HCT116 (cell line): ENCODE measurements at regions of chr9 and their contacts with region 1.

Region 1: DNA sequence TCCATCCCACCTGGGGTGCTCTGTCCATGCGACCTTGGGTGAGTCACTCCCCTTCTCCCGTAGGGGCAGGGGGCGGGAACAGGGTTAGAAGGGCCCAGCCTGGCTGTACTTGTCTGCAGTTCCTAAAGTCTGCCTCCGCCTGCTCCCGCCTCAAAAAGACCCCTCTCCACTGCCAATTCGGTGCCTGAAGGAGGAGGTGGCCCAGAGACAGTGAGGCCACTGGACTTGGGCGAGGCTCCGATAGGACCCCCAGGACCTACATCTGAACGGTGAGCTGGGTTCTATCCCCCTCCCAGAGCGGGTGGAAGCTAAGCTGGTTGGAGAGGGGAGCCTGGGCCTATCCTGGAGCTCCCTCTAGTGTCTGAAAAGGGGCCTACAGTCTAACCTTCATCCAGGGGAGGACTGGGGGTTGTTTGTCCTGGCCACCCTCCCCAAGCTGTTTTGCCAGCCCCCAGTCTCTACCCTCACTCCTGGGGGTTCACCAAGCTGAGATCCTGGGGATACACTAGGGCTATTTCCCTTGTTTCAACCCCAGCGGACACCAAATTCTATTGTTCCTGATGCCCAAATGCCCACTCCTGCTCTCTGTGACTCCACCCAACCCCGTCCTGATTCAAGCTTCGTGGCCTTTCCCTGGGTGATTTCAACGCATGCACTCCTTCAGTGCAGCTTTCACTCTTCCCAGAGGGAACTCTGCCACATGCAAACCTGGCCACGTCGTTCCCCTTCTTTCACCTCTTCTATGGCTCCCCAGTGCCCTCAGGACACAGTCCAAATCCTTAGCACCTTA is 6.1 kb upstream of the CRB2 start:
- DNase-seq: peak; percentile 48
- ATAC-seq: peak; percentile 82
- H3K4me3 ChIP-seq: no peak overlapping the region
- H3K27ac ChIP-seq: no peak overlapping the region
- H3K4me1 ChIP-seq: peaks cover 0 to 16% of the 10 kb centered on the region in 2 experiments; a peak in 2 of 4 replicates
- H3K27me3 ChIP-seq: no peaks in the 10 kb centered on the region
- CTCF ChIP-seq: peak; percentile 78 to 98 (median 97); a peak in 5 of 6 replicates
- POLR2A ChIP-seq: no peak
- RAD21 ChIP-seq: peak; percentile 99

Region 2: GRCh38 chr9:122092611-122093506 is 1257.0 kb before region 1 on chr9 and contains the start of gene TTLL11:
- CTCF ChIA-PET with region 1: no interaction called
- POLR2A ChIA-PET with region 1: no interaction called
- RAD21 ChIA-PET with region 1: no interaction called
- intact Hi-C with region 1: loop called (anchors 10 kb)
- DNase-seq: peak; percentile 82
- ATAC-seq: peak; percentile 87
- H3K4me3 ChIP-seq: peak within 1 kb of the TSS; percentile 69 to 85
- H3K27ac ChIP-seq: peak within 1 kb of the TSS; percentile 23; the same call in 1 of the 2 replicates
- H3K4me1 ChIP-seq: peaks cover 9 to 15% of the 10 kb centered on the region in 2 experiments
- H3K27me3 ChIP-seq: no peaks in the 10 kb centered on the region
- CTCF ChIP-seq: no peak
- POLR2A ChIP-seq: peak; percentile 38
- RAD21 ChIP-seq: no peak
- total RNA-seq, gene TTLL11: 2.2 TPM

Region 3: GRCh38 chr9:122350638-122351355 is 999.1 kb before region 1 on chr9:
- CTCF ChIA-PET with region 1: no interaction called
- POLR2A ChIA-PET with region 1: no interaction called
- RAD21 ChIA-PET with region 1: no interaction called
- intact Hi-C with region 1: loop called (anchors 10 kb)
- DNase-seq: peak; percentile 27
- ATAC-seq: peak; percentile 91
- H3K4me3 ChIP-seq: no peak overlapping the region
- H3K27ac ChIP-seq: no peak overlapping the region
- H3K4me1 ChIP-seq: peaks cover 3 to 13% of the 10 kb centered on the region in 2 experiments; a peak in 3 of 4 replicates
- H3K27me3 ChIP-seq: no peaks in the 10 kb centered on the region
- CTCF ChIP-seq: peak; percentile 93 to 97 (median 93)
- POLR2A ChIP-seq: no peak
- RAD21 ChIP-seq: peak; percentile 99

Region 4: GRCh38 chr9:122810306-122810946 is 539.5 kb before region 1 on chr9:
- CTCF ChIA-PET with region 1: interaction called, 4 read pairs
- POLR2A ChIA-PET with region 1: no interaction called
- RAD21 ChIA-PET with region 1: interaction called in 1 of 2 experiments, 3 read pairs
- intact Hi-C with region 1: loop called (anchors 5 kb)
- DNase-seq: peak; percentile 61
- ATAC-seq: peak; percentile 96
- H3K4me3 ChIP-seq: no peak overlapping the region
- H3K27ac ChIP-seq: no peak overlapping the region
- H3K4me1 ChIP-seq: peaks cover 1 to 6% of the 10 kb centered on the region in 2 experiments; a peak in 3 of 4 replicates
- H3K27me3 ChIP-seq: no peaks in the 10 kb centered on the region
- CTCF ChIP-seq: peak; percentile 54 to 89 (median 85)
- POLR2A ChIP-seq: no peak
- RAD21 ChIP-seq: peak; percentile 97

Region 5: DNA sequence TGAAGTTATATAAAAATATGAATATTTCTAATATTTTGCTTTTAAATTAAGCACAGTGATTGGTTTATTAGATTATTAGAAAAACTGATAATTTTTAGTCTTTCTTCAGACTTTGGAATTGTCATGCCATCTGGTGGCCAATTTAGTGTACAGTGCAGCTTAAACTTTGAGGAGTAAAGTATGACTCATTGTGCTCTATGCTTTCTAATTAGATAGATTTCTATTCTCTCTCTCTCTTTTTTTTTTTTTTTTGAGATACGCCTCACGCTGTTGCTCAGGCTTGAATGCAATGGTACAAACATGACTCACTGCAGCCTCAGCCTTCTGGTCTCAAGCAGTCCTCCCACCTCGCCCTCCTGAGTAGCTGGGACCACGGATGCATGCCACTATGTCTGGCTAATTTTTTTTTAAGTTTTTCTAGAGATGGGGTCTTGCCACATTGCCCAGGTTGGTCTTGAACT is 358.5 kb before region 1 on chr9:
- CTCF ChIA-PET with region 1: interaction called, 8 read pairs
- POLR2A ChIA-PET with region 1: no interaction called
- RAD21 ChIA-PET with region 1: no interaction called
- intact Hi-C with region 1: loop called (anchors 2 kb)
- DNase-seq: peak; percentile 31
- ATAC-seq: peak; percentile 58; the same call in 1 of the 2 replicates
- H3K4me3 ChIP-seq: no peak overlapping the region
- H3K27ac ChIP-seq: no peak overlapping the region; the same call in 1 of the 2 replicates
- H3K4me1 ChIP-seq: no peaks in the 10 kb centered on the region
- H3K27me3 ChIP-seq: no peaks in the 10 kb centered on the region
- CTCF ChIP-seq: peak; percentile 59 to 68 (median 61); a peak in 5 of 6 replicates
- POLR2A ChIP-seq: no peak
- RAD21 ChIP-seq: peak; percentile 75

Region 6: GRCh38 chr9:123102375-123103110 is 247.3 kb before region 1 on chr9:
- CTCF ChIA-PET with region 1: interaction called, 14 read pairs
- POLR2A ChIA-PET with region 1: no interaction called
- RAD21 ChIA-PET with region 1: interaction called in 1 of 2 experiments, 3 read pairs
- intact Hi-C with region 1: loop called (anchors 5 kb)
- DNase-seq: no peak
- ATAC-seq: peak; percentile 44; the same call in 1 of the 2 replicates
- H3K4me3 ChIP-seq: no peak overlapping the region
- H3K27ac ChIP-seq: no peak overlapping the region
- H3K4me1 ChIP-seq: no peaks in the 10 kb centered on the region
- H3K27me3 ChIP-seq: no peaks in the 10 kb centered on the region
- CTCF ChIP-seq: peak; percentile 13 to 45 (median 17); a peak in 2 of 6 replicates
- POLR2A ChIP-seq: no peak
- RAD21 ChIP-seq: peak; percentile 25; the same call in 1 of the 2 replicates

Region 7: DNA sequence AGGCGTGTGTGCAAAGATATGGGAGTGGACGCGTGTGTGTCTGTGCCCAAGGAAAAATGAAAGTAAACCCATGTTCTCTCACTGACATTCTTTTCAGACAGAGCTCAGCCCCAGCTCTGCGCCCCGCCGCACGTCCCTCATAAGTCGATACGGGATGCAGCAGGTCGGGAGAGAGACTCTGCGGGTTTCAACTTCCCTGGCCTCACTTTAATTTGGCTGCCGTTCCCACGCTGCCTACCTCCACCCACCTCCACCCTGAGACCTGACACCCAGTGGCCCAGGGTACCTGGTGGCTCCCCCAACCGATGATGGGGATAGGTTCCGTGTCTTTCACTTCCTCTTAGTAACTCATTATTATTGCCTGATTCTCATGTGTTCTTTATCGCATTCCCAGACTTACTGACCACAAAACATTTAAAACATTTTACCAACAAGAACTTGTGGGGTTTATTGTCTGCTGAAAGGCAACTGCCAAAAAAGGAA is 681.1 kb after region 1 on chr9:
- CTCF ChIA-PET with region 1: no interaction called
- POLR2A ChIA-PET with region 1: no interaction called
- RAD21 ChIA-PET with region 1: no interaction called
- intact Hi-C with region 1: no loop called
- DNase-seq: no peak
- ATAC-seq: no peak
- H3K4me3 ChIP-seq: no peak overlapping the region
- H3K27ac ChIP-seq: no peak overlapping the region
- H3K4me1 ChIP-seq: no peaks in the 10 kb centered on the region
- H3K27me3 ChIP-seq: no peaks in the 10 kb centered on the region
- CTCF ChIP-seq: no peak
- POLR2A ChIP-seq: no peak
- RAD21 ChIP-seq: no peak